B cell (primary cell): ENCODE measurements at regions of chr7 and their contacts with region 1.

Region 1: GRCh38 chr7:102321351-102322177 is 34.7 kb downstream of the SPDYE6 start:
- DNase-seq: peak; percentile 47
- ATAC-seq: peak; percentile 84
- H3K4me3 ChIP-seq: no peak overlapping the region
- H3K4me3 Mint-ChIP-seq: no peak overlapping the region
- H3K27ac ChIP-seq: no peak overlapping the region
- H3K27ac Mint-ChIP-seq: peak overlapping the region; percentile 50
- H3K4me1 ChIP-seq: peaks cover 7 to 8% of the 10 kb centered on the region in 2 donors
- H3K4me1 Mint-ChIP-seq: peaks cover 31% of the 10 kb centered on the region
- H3K27me3 ChIP-seq: no peaks in the 10 kb centered on the region
- H3K27me3 Mint-ChIP-seq: no peaks in the 10 kb centered on the region
- CTCF ChIP-seq: no peak

Region 2: GRCh38 chr7:102205915-102206314 is 115.6 kb before region 1 on chr7:
- CTCF ChIA-PET with region 1: no interaction called
- POLR2A ChIA-PET with region 1: no interaction called
- intact Hi-C with region 1: no loop called
- DNase-seq: no peak
- ATAC-seq: no peak
- H3K4me3 ChIP-seq: no peak overlapping the region
- H3K4me3 Mint-ChIP-seq: no peak overlapping the region
- H3K27ac ChIP-seq: no peak overlapping the region
- H3K27ac Mint-ChIP-seq: no peak overlapping the region
- H3K4me1 ChIP-seq: no peaks in the 10 kb centered on the region
- H3K4me1 Mint-ChIP-seq: peaks cover 2% of the 10 kb centered on the region
- H3K27me3 ChIP-seq: no peaks in the 10 kb centered on the region
- H3K27me3 Mint-ChIP-seq: no peaks in the 10 kb centered on the region
- CTCF ChIP-seq: no peak

Region 3: DNA sequence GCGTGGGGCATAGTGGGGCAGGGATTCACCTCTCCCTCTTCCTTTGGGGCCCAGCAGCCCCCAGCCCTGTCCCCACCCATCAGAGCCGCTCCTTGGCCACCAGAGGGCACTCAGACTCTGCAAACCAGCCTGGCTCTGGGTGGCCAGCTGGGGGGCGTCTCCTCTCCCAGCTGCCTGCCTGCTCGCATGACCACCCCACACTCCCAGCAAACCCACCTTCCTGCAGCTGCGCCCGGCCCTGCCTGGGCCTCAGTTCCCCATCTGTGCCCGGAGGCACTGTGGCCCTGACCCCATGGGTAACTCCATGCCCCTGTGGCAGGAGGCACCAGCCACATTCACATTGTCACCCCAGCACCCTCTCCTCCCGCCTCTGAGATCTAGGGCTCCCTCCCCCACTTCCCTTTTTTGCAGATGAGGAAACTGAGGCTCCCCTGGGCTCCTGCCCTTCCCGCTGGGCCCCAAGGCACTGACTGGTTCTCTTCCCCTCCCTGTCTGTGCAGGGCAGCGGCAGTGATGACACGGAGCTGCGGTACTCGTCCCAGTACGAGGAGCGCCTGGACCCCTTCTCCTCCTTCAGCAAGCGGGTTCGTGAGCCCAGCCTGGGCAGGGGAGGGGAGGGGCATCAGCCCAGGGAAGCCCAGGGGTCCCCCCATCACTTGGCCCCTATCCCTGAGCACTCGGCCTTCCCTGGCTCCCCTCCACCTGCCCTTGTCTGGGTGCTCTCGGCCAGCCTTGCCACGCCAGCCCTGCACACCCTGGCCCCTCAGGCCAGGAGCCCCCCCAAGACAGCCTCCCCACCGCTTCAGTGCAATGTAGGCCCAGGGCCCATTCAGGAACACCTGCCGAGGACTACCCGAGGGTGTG is 41.8 kb before region 1 on chr7:
- CTCF ChIA-PET with region 1: interaction called, 39 read pairs
- POLR2A ChIA-PET with region 1: interaction called, 7 read pairs
- intact Hi-C with region 1: loop called (anchors 1 kb)
- DNase-seq: peak; percentile 84
- ATAC-seq: peak; percentile 90
- H3K4me3 ChIP-seq: peak overlapping the region in 3 of 5 experiments; percentile 13 to 44 (median 15)
- H3K4me3 Mint-ChIP-seq: peak overlapping the region; percentile 83
- H3K27ac ChIP-seq: no peak overlapping the region
- H3K27ac Mint-ChIP-seq: peak overlapping the region; percentile 84
- H3K4me1 ChIP-seq: peaks cover 17 to 24% of the 10 kb centered on the region in 2 donors
- H3K4me1 Mint-ChIP-seq: peaks cover 28% of the 10 kb centered on the region
- H3K27me3 ChIP-seq: no peaks in the 10 kb centered on the region
- H3K27me3 Mint-ChIP-seq: no peaks in the 10 kb centered on the region
- CTCF ChIP-seq: peak; percentile 87

Region 4: GRCh38 chr7:102286237-102287110 is 35.1 kb before region 1 on chr7 and contains the start of gene SH2B2:
- CTCF ChIA-PET with region 1: interaction called, 39 read pairs
- POLR2A ChIA-PET with region 1: interaction called, 8 read pairs
- intact Hi-C with region 1: loop called (anchors 1 kb)
- DNase-seq: peak; percentile 87
- ATAC-seq: peak; percentile 41
- H3K4me3 ChIP-seq: peak within 1 kb of the TSS; percentile 61 to 97 (median 90)
- H3K4me3 Mint-ChIP-seq: peak within 1 kb of the TSS; percentile 89
- H3K27ac ChIP-seq: peak within 1 kb of the TSS; percentile 50 to 74
- H3K27ac Mint-ChIP-seq: peak within 1 kb of the TSS; percentile 89
- H3K4me1 ChIP-seq: peaks cover 54 to 68% of the 10 kb centered on the region in 2 donors
- H3K4me1 Mint-ChIP-seq: peaks cover 65% of the 10 kb centered on the region
- H3K27me3 ChIP-seq: no peaks in the 10 kb centered on the region
- H3K27me3 Mint-ChIP-seq: no peaks in the 10 kb centered on the region
- CTCF ChIP-seq: no peak
- total RNA-seq, gene SH2B2: 41.2 and 47.7 TPM in 2 replicates

Region 5: GRCh38 chr7:102376964-102377466 is 55.5 kb after region 1 on chr7:
- CTCF ChIA-PET with region 1: no interaction called
- POLR2A ChIA-PET with region 1: no interaction called
- intact Hi-C with region 1: no loop called
- DNase-seq: no peak
- ATAC-seq: no peak
- H3K4me3 ChIP-seq: no peak overlapping the region
- H3K4me3 Mint-ChIP-seq: no peak overlapping the region
- H3K27ac ChIP-seq: no peak overlapping the region
- H3K27ac Mint-ChIP-seq: no peak overlapping the region
- H3K4me1 ChIP-seq: no peaks in the 10 kb centered on the region
- H3K4me1 Mint-ChIP-seq: peaks cover 3% of the 10 kb centered on the region
- H3K27me3 ChIP-seq: no peaks in the 10 kb centered on the region
- H3K27me3 Mint-ChIP-seq: no peaks in the 10 kb centered on the region
- CTCF ChIP-seq: no peak